RWPE1 (cell line): ENCODE measurements at regions of chr5 and their contacts with region 1.

Region 1: GRCh38 chr5:170100066-170100943 is 5.4 kb upstream of the FOXI1 start:
- DNase-seq: peak; percentile 69
- H3K27ac ChIP-seq: no peak overlapping the region
- CTCF ChIP-seq: peak; percentile 70

Region 2: GRCh38 chr5:169956756-169957155 is 143.5 kb before region 1 on chr5:
- CTCF ChIA-PET with region 1: no interaction called
- POLR2A ChIA-PET with region 1: no interaction called
- DNase-seq: no peak
- H3K27ac ChIP-seq: no peak overlapping the region
- CTCF ChIP-seq: no peak

Region 3: GRCh38 chr5:170080217-170080616 is 20.1 kb before region 1 on chr5:
- CTCF ChIA-PET with region 1: no interaction called
- POLR2A ChIA-PET with region 1: no interaction called
- DNase-seq: no peak
- H3K27ac ChIP-seq: no peak overlapping the region
- CTCF ChIP-seq: no peak

Region 4: GRCh38 chr5:170216266-170216864 is 116.1 kb after region 1 on chr5:
- CTCF ChIA-PET with region 1: interaction called, 25 read pairs
- POLR2A ChIA-PET with region 1: no interaction called
- DNase-seq: peak; percentile 73
- H3K27ac ChIP-seq: no peak overlapping the region
- CTCF ChIP-seq: peak; percentile 70